GM13976 (cell line): ENCODE measurements at regions of chr6 and their contacts with region 1.

Region 1: DNA sequence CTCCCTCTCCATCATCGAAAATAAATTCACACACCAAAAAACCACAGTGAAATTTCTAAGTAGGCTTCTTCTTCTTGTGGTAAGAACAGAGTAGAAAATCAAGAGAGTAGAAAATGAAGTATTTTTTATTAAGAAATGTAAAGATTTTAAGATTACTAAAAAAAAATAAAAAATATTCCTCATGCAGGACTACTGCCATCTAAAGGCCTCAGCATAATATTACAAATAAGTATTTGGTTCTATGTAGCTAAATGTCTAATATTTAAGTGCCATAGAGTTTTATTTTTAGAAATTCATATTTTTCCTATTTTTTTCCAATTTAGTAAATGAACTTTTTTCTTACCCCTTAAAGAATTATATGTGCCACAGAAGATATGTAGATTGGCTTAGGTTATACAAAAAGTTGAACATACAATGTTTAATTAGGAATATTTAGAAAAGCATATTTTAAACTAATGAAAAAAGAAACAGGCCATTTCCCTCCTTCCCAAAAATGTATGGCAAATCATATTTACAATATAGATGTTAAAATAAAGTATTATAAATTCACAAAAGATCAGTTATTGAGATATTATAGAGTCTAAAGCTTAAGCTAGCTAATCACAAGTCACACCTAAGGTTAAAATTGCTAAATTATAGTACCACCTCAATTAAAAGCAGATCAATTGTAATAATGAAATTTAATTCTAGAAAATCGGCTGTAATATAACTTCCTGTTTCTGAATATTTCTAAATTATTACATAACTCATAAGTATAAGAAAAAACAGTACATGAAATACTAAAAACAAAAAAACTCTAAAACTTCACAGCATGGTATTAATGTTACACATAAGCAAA is 3.5 kb upstream of the NT5DC1 start:
- DNase-seq: no peak
- CTCF ChIP-seq: no peak

Region 2: DNA sequence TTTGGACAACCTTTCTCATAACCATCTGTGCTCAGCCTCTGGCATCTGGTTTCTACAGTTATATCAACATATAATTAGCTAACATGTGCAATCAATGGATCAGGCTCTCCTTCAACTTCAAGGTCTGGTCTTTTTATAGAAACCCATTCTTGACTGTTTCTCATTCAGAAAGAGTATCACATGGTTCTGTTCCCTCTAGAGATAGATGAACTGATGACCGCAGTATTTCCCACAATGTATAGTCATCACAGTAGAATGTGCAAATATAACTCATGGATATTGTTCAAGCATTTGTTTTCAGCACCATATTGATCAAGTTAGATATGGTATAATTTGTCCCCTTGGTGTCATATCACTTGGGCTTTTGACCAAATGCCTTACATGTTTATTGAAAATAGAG is 692.8 kb before region 1 on chr6:
- in situ Hi-C with region 1: no loop called
- DNase-seq: no peak
- CTCF ChIP-seq: no peak

Region 3: DNA sequence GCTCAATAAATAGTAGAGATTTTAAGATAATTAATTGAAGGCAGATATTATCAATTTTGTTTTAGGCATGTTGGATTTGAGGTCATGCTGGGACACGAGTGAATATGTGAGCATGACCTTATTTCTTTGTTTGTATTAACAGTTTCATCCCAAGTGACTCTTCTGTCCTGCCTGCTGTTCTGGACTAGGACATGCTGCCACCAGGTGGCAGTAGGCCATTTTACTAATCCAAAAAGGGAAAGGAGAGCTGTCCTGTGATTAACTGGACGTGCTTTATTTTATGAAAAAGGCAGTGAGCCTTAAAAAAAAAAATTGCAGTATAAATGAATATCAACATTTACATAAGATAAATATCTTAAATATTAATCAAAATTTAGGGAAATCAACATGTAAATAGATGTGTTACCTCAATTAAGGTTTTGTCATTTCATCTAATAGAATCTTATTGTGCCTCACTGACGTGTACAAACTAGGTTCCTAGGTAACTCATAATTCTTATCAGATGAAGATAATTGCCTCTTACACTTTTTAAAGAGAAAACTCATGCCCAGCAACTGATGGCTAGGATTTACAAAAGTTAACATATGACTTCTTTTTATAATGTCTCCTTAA is 86.3 kb before region 1 on chr6:
- in situ Hi-C with region 1: loop called (anchors 5 kb)
- DNase-seq: peak; percentile 13
- CTCF ChIP-seq: peak; percentile 83